Activated naive CD4-positive, alpha-beta T cell treated with anti-CD3 and anti-CD28 coated beads for 36 hours (primary cell): ENCODE measurements at regions of chr15 and their contacts with region 1.

Region 1: GRCh38 chr15:101294731-101295606 is at the start of gene SNRPA1:
- DNase-seq: peak; percentile 97
- H3K4me3 Mint-ChIP-seq: peak within 1 kb of the TSS; percentile 92
- H3K27ac Mint-ChIP-seq: peak within 1 kb of the TSS; percentile 92
- H3K4me1 Mint-ChIP-seq: peaks cover 38% of the 10 kb centered on the region
- H3K27me3 Mint-ChIP-seq: no peaks in the 10 kb centered on the region
- total RNA-seq, gene SNRPA1: 205 to 212 TPM

Region 2: GRCh38 chr15:101251830-101252820 is 42.8 kb before region 1 on chr15 and contains the start of gene CHSY1:
- CTCF ChIA-PET with region 1: no interaction called
- intact Hi-C with region 1: loop called (anchors 2 kb)
- DNase-seq: peak; percentile 79
- H3K4me3 Mint-ChIP-seq: peak within 1 kb of the TSS; percentile 90
- H3K27ac Mint-ChIP-seq: peak within 1 kb of the TSS; percentile 88
- H3K4me1 Mint-ChIP-seq: peaks cover 60% of the 10 kb centered on the region
- H3K27me3 Mint-ChIP-seq: no peaks in the 10 kb centered on the region
- total RNA-seq, gene CHSY1: 19.5 to 21.8 TPM

Region 3: DNA sequence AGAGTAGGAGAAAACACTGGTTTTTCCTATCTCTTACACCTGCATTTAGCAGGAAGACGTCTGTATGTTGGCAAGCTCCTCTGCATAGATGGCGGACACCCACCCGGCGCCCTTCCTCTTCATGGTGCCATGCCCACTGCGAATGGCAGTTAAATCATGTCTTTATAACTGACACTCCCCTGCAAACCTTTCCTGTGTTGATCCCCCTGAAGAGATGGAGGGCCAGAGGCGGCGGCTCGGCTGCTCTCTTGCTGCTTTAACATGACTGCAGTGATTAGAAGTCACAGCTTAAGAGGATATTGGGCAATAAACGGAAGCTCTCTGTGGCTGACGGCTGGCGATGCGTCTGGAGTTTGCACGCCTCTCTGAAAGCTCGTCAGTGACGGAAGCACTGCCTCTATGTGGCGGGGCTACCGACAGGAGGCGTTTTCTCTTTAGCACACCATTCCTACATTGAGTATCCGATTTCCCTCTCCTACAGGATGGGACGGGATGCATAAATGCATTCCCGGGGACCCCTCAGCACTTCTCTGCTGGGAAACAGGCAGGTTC is 25.6 kb after region 1 on chr15:
- CTCF ChIA-PET with region 1: interaction called, 11 read pairs
- intact Hi-C with region 1: loop called (anchors 1 kb)
- DNase-seq: peak; percentile 89
- H3K4me3 Mint-ChIP-seq: peak overlapping the region; percentile 80
- H3K27ac Mint-ChIP-seq: peak overlapping the region; percentile 74
- H3K4me1 Mint-ChIP-seq: peaks cover 10% of the 10 kb centered on the region
- H3K27me3 Mint-ChIP-seq: no peaks in the 10 kb centered on the region

Region 4: DNA sequence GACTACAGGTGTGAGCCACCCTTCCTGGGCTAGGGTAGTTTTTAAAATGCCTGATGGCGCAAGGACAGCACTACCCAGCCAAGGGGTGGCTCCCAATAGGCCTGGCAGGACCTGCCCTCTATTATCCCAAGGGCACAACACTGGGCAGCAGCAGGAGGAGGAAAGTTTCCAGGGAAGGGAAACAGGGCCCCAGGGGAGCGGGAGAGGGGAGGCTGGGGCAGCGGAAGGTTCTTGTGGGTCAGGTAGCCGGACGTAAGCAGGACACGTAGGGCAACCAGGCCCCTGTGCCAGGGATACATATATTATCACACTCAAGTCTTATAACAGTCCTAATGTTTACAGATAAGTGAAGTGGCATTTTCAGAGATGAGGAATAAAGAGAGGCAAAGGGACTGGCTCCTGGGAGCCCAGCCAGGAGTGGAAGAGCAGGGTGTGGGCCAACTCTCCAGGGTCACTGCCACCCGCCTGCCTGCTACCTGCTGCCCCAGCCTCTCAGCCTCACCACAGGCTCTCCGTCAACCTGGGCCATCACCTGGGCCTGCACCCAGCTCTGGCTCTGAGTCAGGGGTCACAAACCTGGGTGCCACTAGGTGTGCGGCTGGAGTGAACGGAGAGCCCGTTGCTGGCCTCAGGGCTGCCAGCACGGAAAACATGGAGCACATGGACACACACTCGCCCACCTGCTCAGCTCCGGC is 73.3 kb after region 1 on chr15:
- CTCF ChIA-PET with region 1: no interaction called
- intact Hi-C with region 1: no loop called
- DNase-seq: no peak
- H3K4me3 Mint-ChIP-seq: no peak overlapping the region
- H3K27ac Mint-ChIP-seq: no peak overlapping the region
- H3K4me1 Mint-ChIP-seq: peaks cover 4% of the 10 kb centered on the region
- H3K27me3 Mint-ChIP-seq: peaks cover under 1% of the 10 kb centered on the region

Region 5: DNA sequence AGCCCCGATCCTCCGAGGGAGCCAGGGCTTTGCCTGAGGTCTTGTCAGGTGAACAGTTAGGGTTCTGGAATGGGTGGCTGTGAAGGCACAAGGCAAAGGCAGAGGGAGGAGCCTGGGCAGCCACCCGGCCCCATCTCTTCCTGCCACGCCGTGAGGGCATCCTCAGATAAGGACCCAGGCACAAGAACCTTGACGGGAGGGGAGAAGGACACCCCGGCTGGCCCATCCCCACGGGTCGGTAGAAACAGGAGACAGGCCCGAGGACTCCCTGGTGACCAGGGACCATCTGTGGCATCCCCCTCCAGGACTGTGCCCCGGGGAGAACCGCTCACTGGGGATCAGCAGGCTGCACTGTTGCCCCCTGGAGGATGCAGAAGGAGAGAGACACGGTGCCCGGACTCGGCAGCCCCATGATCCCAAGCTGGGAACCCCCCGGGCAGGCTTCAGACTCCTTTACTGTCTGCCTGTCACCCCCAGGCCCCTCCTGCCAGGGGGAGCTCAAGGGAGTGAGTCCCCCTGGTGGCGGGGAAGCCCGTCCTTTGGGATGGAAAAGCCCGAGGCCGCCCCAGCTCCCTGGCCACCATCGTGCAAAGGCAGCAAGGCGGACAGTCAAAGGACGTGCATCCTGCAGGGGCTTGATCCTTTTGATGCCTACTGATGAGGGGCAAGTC is 206.9 kb after region 1 on chr15:
- CTCF ChIA-PET with region 1: interaction called, 3 read pairs
- intact Hi-C with region 1: loop called (anchors 1 kb)
- DNase-seq: peak; percentile 74
- H3K4me3 Mint-ChIP-seq: peak overlapping the region; percentile 51
- H3K27ac Mint-ChIP-seq: peak overlapping the region; percentile 44
- H3K4me1 Mint-ChIP-seq: no peaks in the 10 kb centered on the region
- H3K27me3 Mint-ChIP-seq: peaks cover 16% of the 10 kb centered on the region

Region 6: DNA sequence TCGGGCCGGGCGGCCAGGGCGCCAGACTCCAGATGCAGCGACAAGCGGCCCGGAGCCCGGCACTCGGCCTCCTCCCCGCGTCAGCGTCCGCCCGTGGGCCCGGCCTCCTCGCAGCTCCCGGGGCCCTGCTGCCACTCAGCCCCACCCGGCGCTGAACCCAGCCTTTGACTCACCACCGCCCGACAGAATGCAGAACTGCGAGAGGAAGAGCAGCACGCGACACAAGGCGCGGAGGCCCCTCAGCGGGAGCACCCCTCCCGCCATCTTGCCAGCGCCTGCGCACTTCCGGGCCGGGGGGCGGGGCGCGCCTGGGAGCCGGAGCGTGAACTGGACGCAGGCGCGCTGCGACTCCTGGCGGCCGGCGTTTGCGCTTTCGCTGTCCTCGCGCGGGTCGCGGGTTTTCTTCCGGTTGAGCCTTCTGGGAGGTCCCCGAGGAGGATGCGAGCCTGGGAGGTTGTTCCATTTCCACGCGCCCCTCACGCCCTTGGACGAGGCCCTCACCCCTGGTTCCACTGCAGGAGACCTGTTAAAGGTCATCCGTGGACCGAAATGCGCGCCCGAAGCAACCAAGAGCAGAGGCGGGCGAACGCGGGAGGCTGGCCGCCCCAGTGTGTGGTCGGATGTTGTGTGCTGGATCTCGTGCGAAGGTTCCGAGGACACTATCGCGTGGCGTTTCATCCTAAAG is 357.3 kb after region 1 on chr15 and contains the start of gene TM2D3:
- CTCF ChIA-PET with region 1: interaction called, 6 read pairs
- intact Hi-C with region 1: loop called (anchors 1 kb)
- DNase-seq: peak; percentile 95
- H3K4me3 Mint-ChIP-seq: peak within 1 kb of the TSS; percentile 89
- H3K27ac Mint-ChIP-seq: peak within 1 kb of the TSS; percentile 95
- H3K4me1 Mint-ChIP-seq: peaks cover 49% of the 10 kb centered on the region
- H3K27me3 Mint-ChIP-seq: no peaks in the 10 kb centered on the region
- total RNA-seq, gene TM2D3: 52.8 to 53.0 TPM